PC-9 (cell line): ENCODE measurements at regions of chr4 and their contacts with region 1.

Region 1: GRCh38 chr4:139015269-139015947 is at the start of gene NOCT:
- DNase-seq: peak; percentile 71 to 87
- H3K4me3 ChIP-seq: peak within 1 kb of the TSS; percentile 73
- H3K27ac ChIP-seq: peak within 1 kb of the TSS; percentile 92
- H3K4me1 ChIP-seq: peaks cover 30% of the 10 kb centered on the region
- H3K27me3 ChIP-seq: no peaks in the 10 kb centered on the region
- CTCF ChIP-seq: no peak
- total RNA-seq, gene NOCT: 4.5 and 6.8 TPM in 2 replicates

Region 2: GRCh38 chr4:138897811-138898226 is 117.6 kb before region 1 on chr4:
- CTCF ChIA-PET with region 1: no interaction called
- POLR2A ChIA-PET with region 1: interaction called, 11 read pairs
- intact Hi-C with region 1: no loop called
- DNase-seq: peak; percentile 50 to 92
- H3K4me3 ChIP-seq: peak overlapping the region; percentile 23; the same call in 1 of the 2 replicates
- H3K27ac ChIP-seq: peak overlapping the region; percentile 82
- H3K4me1 ChIP-seq: peaks cover 24% of the 10 kb centered on the region
- H3K27me3 ChIP-seq: no peaks in the 10 kb centered on the region
- CTCF ChIP-seq: no peak

Region 3: DNA sequence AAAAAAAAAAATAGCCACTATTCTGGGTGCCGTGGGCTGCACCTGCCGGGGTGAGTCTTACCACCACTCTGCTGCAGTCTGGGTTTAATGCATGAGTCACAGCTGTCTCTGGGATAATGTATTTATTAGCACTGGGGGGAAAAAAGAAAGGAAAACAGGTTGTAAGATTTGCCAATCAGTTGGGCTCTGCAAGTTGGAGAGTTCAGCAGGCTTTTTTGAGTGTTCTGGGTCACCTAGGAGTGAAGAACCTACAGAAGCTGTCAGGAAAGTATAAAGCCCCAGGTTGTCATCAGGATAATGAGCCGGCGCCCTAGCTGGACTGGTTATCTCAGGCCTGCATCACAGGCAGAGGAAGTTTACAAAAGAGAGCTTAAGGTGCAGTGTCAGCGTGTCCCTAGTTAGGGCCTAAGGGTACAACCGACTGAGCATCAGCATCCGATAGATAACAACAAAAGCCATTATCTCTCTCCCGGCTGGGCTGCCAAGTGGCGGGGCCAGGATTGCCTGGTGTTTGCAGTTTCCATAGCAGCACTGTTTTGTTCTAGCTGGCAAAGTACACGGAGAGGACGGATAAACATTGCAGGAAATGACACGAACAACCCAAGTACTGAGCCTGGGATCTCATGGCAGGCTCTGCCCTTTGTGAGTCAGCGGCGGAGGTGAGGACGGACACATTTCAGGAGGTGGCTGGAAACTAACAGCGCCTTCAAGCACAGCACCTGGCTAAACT is 104.6 kb before region 1 on chr4:
- CTCF ChIA-PET with region 1: no interaction called
- POLR2A ChIA-PET with region 1: no interaction called
- intact Hi-C with region 1: loop called (anchors 1 kb)
- DNase-seq: peak; percentile 79 to 88
- H3K4me3 ChIP-seq: peak overlapping the region; percentile 41; the same call in 1 of the 2 replicates
- H3K27ac ChIP-seq: peak overlapping the region; percentile 66
- H3K4me1 ChIP-seq: peaks cover 27% of the 10 kb centered on the region
- H3K27me3 ChIP-seq: no peaks in the 10 kb centered on the region
- CTCF ChIP-seq: no peak

Region 4: GRCh38 chr4:138952411-138952810 is 63.0 kb before region 1 on chr4:
- CTCF ChIA-PET with region 1: no interaction called
- POLR2A ChIA-PET with region 1: no interaction called
- intact Hi-C with region 1: loop called (anchors 1 kb)
- DNase-seq: peak in 1 of 2 experiments; percentile 16
- H3K4me3 ChIP-seq: no peak overlapping the region
- H3K27ac ChIP-seq: no peak overlapping the region
- H3K4me1 ChIP-seq: peaks cover 47% of the 10 kb centered on the region
- H3K27me3 ChIP-seq: no peaks in the 10 kb centered on the region
- CTCF ChIP-seq: no peak

Region 5: DNA sequence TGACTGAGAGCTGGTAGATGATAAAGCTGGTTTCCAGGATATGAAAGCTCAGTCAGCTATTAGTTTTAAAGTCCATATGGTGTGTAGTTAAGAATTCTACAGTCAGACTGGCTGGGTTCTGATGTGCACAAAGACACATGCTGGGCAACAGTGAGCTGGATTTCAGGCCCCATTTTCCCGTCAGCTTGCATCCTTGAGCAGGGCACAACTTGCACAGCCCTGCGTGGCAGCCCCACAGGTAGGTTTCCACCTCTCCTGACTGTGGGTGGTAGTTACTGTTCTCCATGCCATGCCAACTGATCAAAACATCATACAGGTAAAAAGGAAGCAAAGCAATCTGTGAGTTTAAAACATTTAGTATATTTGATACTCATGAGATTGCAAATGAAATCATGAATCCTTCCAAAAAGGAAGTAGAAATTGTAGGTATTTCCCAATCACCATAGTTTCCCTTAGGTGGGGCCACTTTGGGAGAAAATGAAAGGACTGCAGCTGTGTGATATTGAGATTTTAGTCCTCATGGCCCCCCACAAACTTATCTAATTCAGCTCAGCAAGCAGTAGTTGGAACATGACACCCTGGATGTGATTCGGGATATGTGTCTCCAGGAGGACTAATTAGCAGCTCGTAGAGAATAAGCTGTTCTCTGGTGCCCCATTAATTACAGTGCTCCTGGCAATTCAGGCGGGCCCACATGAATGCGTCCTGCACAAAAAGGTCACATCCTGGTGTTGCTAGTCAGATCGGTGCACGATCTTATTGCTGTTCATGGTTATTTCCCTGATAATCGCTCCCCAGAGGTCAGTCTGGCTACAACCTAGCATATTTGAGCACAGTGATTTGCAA is 42.2 kb before region 1 on chr4:
- CTCF ChIA-PET with region 1: no interaction called
- POLR2A ChIA-PET with region 1: no interaction called
- intact Hi-C with region 1: loop called (anchors 1 kb)
- DNase-seq: no peak
- H3K4me3 ChIP-seq: no peak overlapping the region
- H3K27ac ChIP-seq: no peak overlapping the region
- H3K4me1 ChIP-seq: 0 out of 2 replicates have a peak, but pooled peaks cover 3% of the 10 kb centered on the region
- H3K27me3 ChIP-seq: no peaks in the 10 kb centered on the region
- CTCF ChIP-seq: no peak

Region 6: DNA sequence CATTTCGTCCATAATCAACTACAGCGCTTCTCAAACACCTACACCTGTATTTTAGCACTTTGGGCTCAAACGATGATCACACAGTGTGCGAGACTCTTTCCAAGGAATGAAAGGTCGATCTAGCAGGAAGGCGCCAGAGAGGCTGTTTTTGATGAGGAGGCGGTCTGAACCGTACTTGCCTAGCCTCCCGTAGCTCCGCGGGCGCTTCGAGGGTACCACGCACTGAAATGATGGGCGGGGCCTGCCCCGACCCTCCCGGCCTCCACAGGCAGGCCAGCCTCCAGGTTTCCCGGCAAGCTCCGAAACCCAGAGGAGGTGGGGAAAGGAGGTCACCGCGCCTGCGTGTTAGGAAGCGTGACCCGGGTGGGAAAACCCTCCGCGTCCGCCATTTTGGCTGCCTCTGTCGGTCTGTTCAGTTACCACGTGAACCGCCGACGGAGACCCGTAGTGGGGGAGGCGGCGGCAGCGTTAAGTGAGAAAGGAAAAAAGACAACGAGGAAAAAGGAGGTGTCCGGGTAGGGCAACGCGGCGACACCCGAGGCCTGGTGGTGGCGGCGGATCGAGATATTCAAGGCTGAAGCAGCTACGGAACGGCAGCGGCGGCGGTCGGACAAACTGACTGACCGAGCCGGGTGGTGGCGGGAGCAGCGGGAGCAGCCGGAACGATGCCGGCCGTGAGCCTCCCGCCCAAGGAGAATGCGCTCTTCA is 285.9 kb after region 1 on chr4 and contains the start of gene NAA15:
- CTCF ChIA-PET with region 1: no interaction called
- POLR2A ChIA-PET with region 1: interaction called, 5 read pairs
- intact Hi-C with region 1: loop called (anchors 5 kb)
- DNase-seq: peak; percentile 87 to 97
- H3K4me3 ChIP-seq: peak within 1 kb of the TSS; percentile 74
- H3K27ac ChIP-seq: peak within 1 kb of the TSS; percentile 83
- H3K4me1 ChIP-seq: peaks cover 24% of the 10 kb centered on the region
- H3K27me3 ChIP-seq: no peaks in the 10 kb centered on the region
- CTCF ChIP-seq: no peak
- total RNA-seq, gene NAA15: 43.8 and 51.7 TPM in 2 replicates

Region 7: GRCh38 chr4:139593091-139593564 is 577.7 kb after region 1 on chr4:
- CTCF ChIA-PET with region 1: no interaction called
- POLR2A ChIA-PET with region 1: no interaction called
- intact Hi-C with region 1: no loop called
- DNase-seq: no peak
- H3K4me3 ChIP-seq: no peak overlapping the region
- H3K27ac ChIP-seq: no peak overlapping the region
- H3K4me1 ChIP-seq: peaks cover 28% of the 10 kb centered on the region
- H3K27me3 ChIP-seq: no peaks in the 10 kb centered on the region
- CTCF ChIP-seq: no peak